ENCODE measurements at regions of chr7 and their contacts with region 1.

Region 1: DNA sequence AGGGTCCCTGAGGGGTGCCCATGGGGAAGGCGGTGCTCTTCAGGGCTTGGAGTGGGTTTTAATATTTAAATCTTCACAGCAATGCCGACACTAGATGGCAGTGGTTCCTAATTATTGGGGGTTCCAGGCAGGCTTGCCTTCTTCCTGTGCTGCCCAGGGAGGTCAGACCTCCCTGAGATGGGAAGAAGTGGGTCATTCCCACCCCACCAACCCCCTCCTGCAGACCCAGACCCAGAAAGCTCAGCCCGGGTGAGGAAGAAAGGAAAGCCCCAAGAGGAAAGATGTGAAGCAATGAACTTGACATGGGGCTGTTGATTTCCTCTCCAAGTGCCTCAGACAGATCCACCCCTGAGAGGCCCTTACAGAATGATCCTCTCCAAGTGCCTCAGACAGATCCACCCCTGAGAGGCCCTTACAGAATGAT is 85.1 kb upstream of the LANCL2 start:
- DNase-seq: peak; percentile 78
- H3K4me3 ChIP-seq: no peak overlapping the region
- H3K27ac ChIP-seq: no peak overlapping the region
- H3K4me1 ChIP-seq: no peaks in the 10 kb centered on the region
- H3K27me3 ChIP-seq: peaks cover 4% of the 10 kb centered on the region
- CTCF ChIP-seq: peak; percentile 64

Region 2: GRCh38 chr7:55415173-55415778 is 135.2 kb after region 1 on chr7:
- CTCF ChIA-PET with region 1: interaction called, 7 read pairs
- POLR2A ChIA-PET with region 1: no interaction called
- intact Hi-C with region 1: loop called (anchors 1 kb)
- DNase-seq: peak; percentile 84
- H3K4me3 ChIP-seq: no peak overlapping the region
- H3K27ac ChIP-seq: no peak overlapping the region
- H3K4me1 ChIP-seq: no peaks in the 10 kb centered on the region
- H3K27me3 ChIP-seq: no peaks in the 10 kb centered on the region
- CTCF ChIP-seq: peak; percentile 80

Region 3: DNA sequence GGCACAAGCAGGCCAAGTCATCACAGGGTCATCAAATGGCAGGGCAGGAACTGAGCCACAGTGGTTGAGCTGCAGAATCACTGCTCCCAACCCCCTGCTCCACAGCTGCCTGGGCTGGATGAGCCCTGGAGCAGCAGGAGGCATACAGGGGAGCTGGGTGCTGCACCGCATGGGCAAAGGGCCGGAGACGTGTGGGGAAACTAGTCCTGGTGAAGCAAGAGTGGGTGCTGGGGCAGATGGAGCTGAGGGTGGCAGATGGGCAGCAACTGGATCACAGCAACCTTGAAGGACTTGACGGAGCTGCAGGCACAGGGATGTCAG is 308.3 kb after region 1 on chr7:
- CTCF ChIA-PET with region 1: no interaction called
- POLR2A ChIA-PET with region 1: no interaction called
- intact Hi-C with region 1: loop called (anchors 5 kb)
- DNase-seq: no peak
- H3K4me3 ChIP-seq: no peak overlapping the region
- H3K27ac ChIP-seq: no peak overlapping the region
- H3K4me1 ChIP-seq: no peaks in the 10 kb centered on the region
- H3K27me3 ChIP-seq: no peaks in the 10 kb centered on the region
- CTCF ChIP-seq: no peak

Region 4: DNA sequence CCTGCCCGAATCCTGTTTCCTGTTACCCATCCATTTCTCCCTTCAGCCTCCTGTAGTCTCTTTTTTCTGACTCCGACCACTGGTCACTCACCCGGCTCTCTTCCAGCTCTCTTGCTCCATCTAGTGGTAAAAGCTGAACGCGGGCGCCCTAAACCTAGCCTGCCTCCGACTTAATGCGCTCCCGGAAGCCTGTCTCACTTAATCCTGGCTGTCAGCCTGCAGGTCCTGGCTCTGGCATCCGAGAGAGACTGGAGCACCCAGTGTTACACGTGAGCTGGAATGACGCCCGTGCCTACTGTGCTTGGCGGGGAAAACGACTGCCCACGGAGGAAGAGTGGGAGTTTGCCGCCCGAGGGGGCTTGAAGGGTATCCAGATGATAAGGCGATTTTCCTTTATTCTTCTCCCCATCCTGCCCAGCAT is 794.3 kb after region 1 on chr7:
- CTCF ChIA-PET with region 1: no interaction called
- POLR2A ChIA-PET with region 1: no interaction called
- intact Hi-C with region 1: loop called (anchors 10 kb)
- DNase-seq: peak; percentile 90
- H3K4me3 ChIP-seq: no peak overlapping the region
- H3K27ac ChIP-seq: no peak overlapping the region
- H3K4me1 ChIP-seq: no peaks in the 10 kb centered on the region
- H3K27me3 ChIP-seq: no peaks in the 10 kb centered on the region
- CTCF ChIP-seq: peak; percentile 96

Measured in A673 (cell line).